ENCODE measurements at regions of chr12 and their contacts with region 1.

Region 1: DNA sequence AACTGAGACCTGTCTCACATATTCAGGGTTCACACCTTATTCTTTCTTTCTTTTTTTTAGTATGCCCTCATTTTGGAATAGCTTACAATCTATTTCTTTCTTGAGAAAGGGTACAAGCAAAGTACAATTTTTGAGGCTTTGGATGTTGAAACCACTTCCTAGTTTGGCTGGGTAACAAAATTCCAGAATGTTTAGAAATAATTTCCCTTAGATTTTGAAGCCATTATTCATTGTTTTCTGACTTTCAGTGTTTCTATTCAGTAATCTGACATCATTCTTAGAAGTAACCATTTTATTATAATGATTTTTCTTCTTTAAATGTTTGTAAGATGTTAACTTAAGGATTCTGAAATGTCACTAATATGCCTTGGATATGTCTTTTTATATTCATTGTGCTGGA is 28.2 kb downstream of the ST8SIA1 start:
- DNase-seq: no peak
- H3K4me3 ChIP-seq: no peak overlapping the region
- H3K27ac ChIP-seq: no peak overlapping the region
- H3K4me1 ChIP-seq: no peaks in the 10 kb centered on the region
- H3K27me3 ChIP-seq: no peaks in the 10 kb centered on the region
- CTCF ChIP-seq: no peak
- EP300 ChIP-seq: no peak
- POLR2A ChIP-seq: no peak

Region 2: GRCh38 chr12:23204933-23205778 is 898.8 kb after region 1 on chr12:
- intact Hi-C with region 1: loop called in 1 of 4 experiments (anchors 5 kb)
- DNase-seq: peak in 1 of 5 donors; percentile 18
- H3K4me3 ChIP-seq: no peak overlapping the region
- H3K27ac ChIP-seq: no peak overlapping the region
- H3K4me1 ChIP-seq: no peaks in the 10 kb centered on the region
- H3K27me3 ChIP-seq: no peaks in the 10 kb centered on the region
- CTCF ChIP-seq: peak; percentile 31 to 68 (median 62)
- EP300 ChIP-seq: no peak
- POLR2A ChIP-seq: no peak